Left cardiac atrium (tissue), 4 donors: ENCODE measurements at regions of chr4 and their contacts with region 1.

Region 1: GRCh38 chr4:185203486-185204237 is at the start of gene CFAP97:
- DNase-seq: peak; percentile 96
- ATAC-seq: peak; percentile 95 to 97
- total RNA-seq, gene CFAP97: 16.8 to 25.9 TPM

Region 2: DNA sequence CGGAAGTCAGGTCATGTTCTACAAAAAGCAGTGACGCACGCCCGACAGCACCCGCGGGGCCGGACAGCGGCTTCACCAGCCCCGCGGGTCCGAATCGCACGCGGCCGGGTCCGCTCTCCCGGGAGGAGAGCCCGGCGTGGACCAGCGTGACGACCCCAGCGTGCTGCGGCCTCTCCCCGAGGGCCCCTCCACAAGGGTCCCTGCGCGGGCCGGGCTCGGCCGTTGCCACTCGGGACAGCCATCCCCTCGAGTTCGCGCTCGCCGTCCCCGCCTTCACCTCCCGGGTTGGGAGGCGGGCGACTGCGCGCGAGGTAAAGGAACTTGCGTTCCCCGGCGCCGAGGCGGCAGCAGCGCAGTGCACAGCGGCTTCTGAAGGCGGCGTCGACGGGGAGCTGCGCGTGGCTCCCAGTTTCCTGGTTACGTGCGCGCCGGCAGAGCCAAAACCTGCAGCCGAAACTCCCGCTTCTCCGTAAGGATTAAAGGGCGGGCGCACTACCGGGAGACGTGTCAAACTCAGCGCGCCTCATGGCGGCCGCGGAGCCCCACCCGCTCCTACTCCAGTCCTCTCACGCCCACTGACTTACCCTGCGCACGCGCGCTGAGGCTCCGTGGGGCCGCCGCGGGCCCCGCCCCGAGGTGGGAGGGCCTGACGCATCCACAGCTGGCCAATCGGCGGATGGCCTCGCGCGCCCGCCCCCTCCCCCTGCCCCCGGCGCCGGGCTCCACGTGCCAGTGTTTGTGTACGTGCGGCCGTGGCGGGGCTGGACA is 192.5 kb after region 1 on chr4:
- intact Hi-C with region 1: loop called in 1 of 2 experiments (anchors 10 kb)
- DNase-seq: peak; percentile 96
- ATAC-seq: peak; percentile 98